Dendritic cell treated with granulocyte-macrophage colony-stimulating factor and Interleukin-4, amounts not matched to agents 40 ng/mL and 50 ng/mL, for 4 days (primary cell): ENCODE measurements at regions of chr5 and their contacts with region 1.

Region 1: DNA sequence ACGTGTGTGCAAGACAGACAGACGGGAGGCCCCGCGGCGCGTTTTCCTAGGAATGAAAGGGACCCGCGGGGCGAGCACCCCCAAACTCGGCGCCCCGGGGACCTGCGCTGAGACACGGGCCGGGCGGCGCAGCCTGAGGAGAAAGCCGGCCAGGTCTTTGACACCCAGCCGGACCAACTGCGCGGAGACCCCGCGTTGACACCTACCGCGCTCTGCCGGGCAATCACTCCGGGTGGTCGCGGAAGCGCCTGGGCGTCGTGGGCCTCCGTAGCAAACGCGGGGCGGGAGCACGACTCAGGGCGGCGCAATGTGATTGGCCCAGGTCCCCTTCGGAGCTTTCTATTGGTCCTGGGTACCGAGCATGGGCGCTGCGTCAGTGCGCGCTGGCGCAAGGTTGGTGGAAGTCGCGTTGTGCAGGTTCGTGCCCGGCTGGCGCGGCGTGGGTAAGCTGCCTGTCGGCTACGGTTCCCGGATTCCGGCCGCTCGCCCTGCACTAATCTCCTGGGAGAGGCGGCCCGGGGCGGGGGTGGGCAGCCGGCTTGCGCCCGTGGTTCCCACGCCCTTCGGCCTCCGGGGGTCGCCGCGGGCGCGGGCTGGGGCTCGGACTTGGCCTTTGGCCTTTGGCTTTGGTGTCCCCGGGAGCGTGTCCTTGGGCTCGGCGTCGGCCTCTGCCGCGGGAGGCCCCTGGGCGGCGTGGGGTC is at the starts of genes FASTKD3 and MTRR:
- H3K4me3 Mint-ChIP-seq: peak within 1 kb of the TSS; percentile 89
- H3K27ac Mint-ChIP-seq: peak within 1 kb of the TSS; percentile 82
- H3K4me1 Mint-ChIP-seq: peaks cover 61% of the 10 kb centered on the region
- H3K27me3 Mint-ChIP-seq: no peaks in the 10 kb centered on the region

Region 2: GRCh38 chr5:7947301-7947700 is 78.4 kb after region 1 on chr5:
- intact Hi-C with region 1: no loop called
- H3K4me3 Mint-ChIP-seq: no peak overlapping the region
- H3K27ac Mint-ChIP-seq: no peak overlapping the region
- H3K4me1 Mint-ChIP-seq: no peaks in the 10 kb centered on the region
- H3K27me3 Mint-ChIP-seq: no peaks in the 10 kb centered on the region

Region 3: GRCh38 chr5:8457187-8458037 is 588.5 kb after region 1 on chr5:
- intact Hi-C with region 1: loop called (anchors 10 kb)
- H3K4me3 Mint-ChIP-seq: peak overlapping the region; percentile 84
- H3K27ac Mint-ChIP-seq: peak overlapping the region; percentile 84
- H3K4me1 Mint-ChIP-seq: peaks cover 35% of the 10 kb centered on the region
- H3K27me3 Mint-ChIP-seq: peaks cover 1% of the 10 kb centered on the region